Activated CD8-positive, alpha-beta T cell treated with anti-CD3 and anti-CD28 coated beads for 36 hours (primary cell): ENCODE measurements at regions of chr21 and their contacts with region 1.

Region 1: GRCh38 chr21:39518138-39518846 is 66.5 kb downstream of the SH3BGR start:
- DNase-seq: peak; percentile 64
- ATAC-seq: peak; percentile 88
- H3K4me3 Mint-ChIP-seq: no peak overlapping the region
- H3K27ac Mint-ChIP-seq: no peak overlapping the region
- H3K4me1 Mint-ChIP-seq: peaks cover 3% of the 10 kb centered on the region
- H3K27me3 Mint-ChIP-seq: no peaks in the 10 kb centered on the region
- CTCF ChIP-seq: peak; percentile 97

Region 2: GRCh38 chr21:39406065-39406464 is 112.2 kb before region 1 on chr21:
- CTCF ChIA-PET with region 1: no interaction called
- POLR2A ChIA-PET with region 1: no interaction called
- intact Hi-C with region 1: no loop called
- DNase-seq: no peak
- ATAC-seq: peak; percentile 27
- H3K4me3 Mint-ChIP-seq: no peak overlapping the region
- H3K27ac Mint-ChIP-seq: no peak overlapping the region
- H3K4me1 Mint-ChIP-seq: no peaks in the 10 kb centered on the region
- H3K27me3 Mint-ChIP-seq: no peaks in the 10 kb centered on the region
- CTCF ChIP-seq: no peak

Region 3: GRCh38 chr21:39502631-39503030 is 15.7 kb before region 1 on chr21:
- CTCF ChIA-PET with region 1: interaction called, 20 read pairs
- POLR2A ChIA-PET with region 1: interaction called, 3 read pairs
- intact Hi-C with region 1: no loop called
- DNase-seq: no peak
- ATAC-seq: no peak
- H3K4me3 Mint-ChIP-seq: no peak overlapping the region
- H3K27ac Mint-ChIP-seq: no peak overlapping the region
- H3K4me1 Mint-ChIP-seq: no peaks in the 10 kb centered on the region
- H3K27me3 Mint-ChIP-seq: no peaks in the 10 kb centered on the region
- CTCF ChIP-seq: no peak

Region 4: DNA sequence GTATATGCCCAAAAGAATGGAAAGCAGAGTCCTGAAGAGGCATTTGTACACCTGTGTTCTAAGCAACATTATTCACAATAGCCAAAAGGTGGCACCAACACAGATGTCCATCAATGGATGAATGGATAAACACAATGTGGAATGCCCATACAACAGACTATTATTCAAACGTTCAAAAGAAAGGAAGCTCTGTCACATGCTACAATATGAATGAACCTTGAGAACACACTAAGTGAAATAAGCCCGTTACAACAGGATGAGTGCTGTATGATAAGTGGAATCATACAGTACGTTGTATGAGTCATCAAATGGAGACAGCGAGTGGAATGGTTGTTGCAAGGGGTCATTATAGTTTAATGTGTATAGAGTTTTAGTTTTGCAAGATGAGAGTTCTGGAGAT is 13.5 kb after region 1 on chr21:
- CTCF ChIA-PET with region 1: interaction called, 10 read pairs
- POLR2A ChIA-PET with region 1: interaction called, 3 read pairs
- intact Hi-C with region 1: no loop called
- DNase-seq: no peak
- ATAC-seq: no peak
- H3K4me3 Mint-ChIP-seq: no peak overlapping the region
- H3K27ac Mint-ChIP-seq: no peak overlapping the region
- H3K4me1 Mint-ChIP-seq: no peaks in the 10 kb centered on the region
- H3K27me3 Mint-ChIP-seq: peaks cover 12% of the 10 kb centered on the region
- CTCF ChIP-seq: no peak

Region 5: GRCh38 chr21:39715804-39716397 is 197.6 kb after region 1 on chr21:
- CTCF ChIA-PET with region 1: interaction called, 21 read pairs
- POLR2A ChIA-PET with region 1: no interaction called
- intact Hi-C with region 1: loop called (anchors 1 kb)
- DNase-seq: peak; percentile 68
- ATAC-seq: no peak
- H3K4me3 Mint-ChIP-seq: no peak overlapping the region
- H3K27ac Mint-ChIP-seq: no peak overlapping the region
- H3K4me1 Mint-ChIP-seq: no peaks in the 10 kb centered on the region
- H3K27me3 Mint-ChIP-seq: peaks cover 6% of the 10 kb centered on the region
- CTCF ChIP-seq: peak; percentile 77